Transverse colon (tissue), 4 donors: ENCODE measurements at regions of chr5 and their contacts with region 1.

Region 1: DNA sequence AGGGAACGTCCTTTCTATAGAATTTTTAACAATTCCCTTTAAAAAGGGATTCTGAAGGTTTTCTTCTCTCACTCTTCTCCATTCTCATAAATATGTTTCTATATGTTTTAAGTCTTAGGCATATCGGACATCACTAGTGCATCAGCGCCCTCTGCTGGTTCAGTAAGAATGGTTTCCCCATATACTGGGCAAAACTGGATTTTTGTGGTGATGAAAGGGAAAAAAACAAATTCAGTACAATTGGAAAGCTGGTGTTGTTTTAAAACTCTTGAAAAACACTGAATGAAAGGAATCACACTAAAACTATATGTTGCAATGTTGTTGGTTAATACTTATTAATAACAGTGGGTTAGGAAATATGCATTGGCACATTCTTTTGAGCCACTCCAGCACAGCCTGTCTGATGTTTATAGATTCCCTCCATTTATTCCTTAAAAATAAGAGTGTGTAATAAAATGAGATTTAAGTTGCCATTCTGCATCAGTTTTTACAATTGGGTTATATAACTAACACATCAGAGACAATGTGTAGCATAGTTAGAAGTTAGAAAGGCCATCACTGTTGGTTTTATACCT is 15.8 kb downstream of the CWC27 start:
- DNase-seq: peak; percentile 76
- H3K4me3 ChIP-seq: no peak overlapping the region
- H3K27ac ChIP-seq: no peak overlapping the region
- H3K4me1 ChIP-seq: no peaks in the 10 kb centered on the region
- H3K27me3 ChIP-seq: no peaks in the 10 kb centered on the region
- CTCF ChIP-seq: peak; percentile 76 to 81 (median 77)
- EP300 ChIP-seq: no peak
- POLR2A ChIP-seq: no peak

Region 2: DNA sequence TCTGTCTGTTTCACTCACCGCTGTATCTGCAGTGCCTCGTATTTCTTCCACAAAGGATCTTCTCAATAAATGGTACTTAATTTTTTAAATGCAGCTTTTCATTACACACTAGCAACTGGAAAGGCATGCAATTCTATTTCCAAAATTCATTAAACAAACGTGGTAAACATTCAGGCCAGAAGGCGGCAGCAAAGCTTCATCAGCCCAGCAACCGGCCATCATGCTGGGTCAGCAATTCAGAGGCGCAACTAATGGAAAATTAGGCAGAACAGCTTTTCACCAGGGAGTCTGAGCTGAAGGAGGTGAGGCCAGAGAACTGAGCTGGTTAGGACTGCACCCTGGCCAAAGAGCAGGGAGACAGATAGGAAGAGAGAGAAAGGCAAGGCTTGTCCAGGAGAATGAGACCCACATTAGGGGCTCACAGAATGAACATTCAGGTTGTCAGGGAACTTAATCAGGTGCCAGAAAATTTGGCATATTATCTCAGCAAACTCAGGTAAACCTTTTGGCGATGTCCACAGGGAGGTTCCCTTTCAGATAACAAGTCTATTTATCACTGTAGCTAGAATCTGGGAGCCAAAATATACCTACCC is 636.6 kb before region 1 on chr5:
- in situ Hi-C with region 1: no loop called
- intact Hi-C with region 1: loop called (anchors 10 kb)
- DNase-seq: peak; percentile 20
- H3K4me3 ChIP-seq: no peak overlapping the region
- H3K27ac ChIP-seq: no peak overlapping the region
- H3K4me1 ChIP-seq: peaks cover 0 to 12% (median 0%) of the 10 kb centered on the region in 4 donors
- H3K27me3 ChIP-seq: no peaks in the 10 kb centered on the region
- CTCF ChIP-seq: peak; percentile 43 to 60 (median 55)
- EP300 ChIP-seq: no peak
- POLR2A ChIP-seq: no peak

Region 3: DNA sequence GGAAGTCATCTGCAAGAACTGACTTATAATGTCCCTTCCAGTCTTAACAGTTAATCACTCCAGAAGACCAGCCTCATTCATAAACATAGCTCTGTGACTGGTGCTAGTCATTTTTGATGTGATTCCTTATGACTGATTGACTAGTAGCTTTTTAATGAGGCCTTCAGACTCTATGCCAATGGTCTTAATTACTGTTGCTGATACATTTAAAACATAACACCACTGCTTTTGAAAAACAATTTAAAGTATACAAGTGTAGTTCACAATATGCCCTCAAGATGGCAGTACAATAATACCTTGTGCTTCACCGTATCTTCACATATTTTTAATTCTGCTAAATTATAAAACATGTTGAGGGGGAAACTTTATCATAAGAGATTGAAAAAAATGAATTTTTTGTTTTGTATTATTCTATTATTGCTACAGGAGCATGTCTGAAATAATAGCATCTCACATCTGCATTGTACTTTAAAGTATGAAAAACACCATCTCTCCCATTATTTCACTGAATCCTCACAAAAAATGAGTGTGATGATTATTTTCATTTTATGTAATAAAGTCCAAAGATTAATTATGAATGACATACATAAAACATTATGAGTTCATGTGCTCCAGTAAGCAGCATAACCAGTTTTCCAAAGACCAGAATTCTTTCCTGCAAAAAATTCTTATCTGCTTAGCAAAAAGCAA is 149.4 kb before region 1 on chr5:
- in situ Hi-C with region 1: loop called (anchors 5 to 10 kb)
- intact Hi-C with region 1: loop called (anchors 2 kb)
- DNase-seq: no peak
- H3K4me3 ChIP-seq: no peak overlapping the region
- H3K27ac ChIP-seq: no peak overlapping the region
- H3K4me1 ChIP-seq: no peaks in the 10 kb centered on the region
- H3K27me3 ChIP-seq: peaks cover 6% of the 10 kb centered on the region
- CTCF ChIP-seq: peak; percentile 73 to 83 (median 78)
- EP300 ChIP-seq: no peak
- POLR2A ChIP-seq: no peak